T-cell (primary cell): ENCODE measurements at regions of chr6 and their contacts with region 1.

Region 1: GRCh38 chr6:105431226-105431625 is 28.3 kb upstream of the PREP start:
- DNase-seq: peak in 7 of 35 experiments; percentile 6 to 73 (median 13)
- ATAC-seq: no peak
- H3K4me3 ChIP-seq: no peak overlapping the region
- H3K4me3 Mint-ChIP-seq: no peak overlapping the region
- H3K27ac ChIP-seq: no peak overlapping the region
- H3K27ac Mint-ChIP-seq: no peak overlapping the region
- H3K4me1 ChIP-seq: no peaks in the 10 kb centered on the region
- H3K4me1 Mint-ChIP-seq: no peaks in the 10 kb centered on the region
- H3K27me3 ChIP-seq: no peaks in the 10 kb centered on the region
- H3K27me3 Mint-ChIP-seq: peaks cover 3 to 5% of the 10 kb centered on the region in 2 donors

Region 2: DNA sequence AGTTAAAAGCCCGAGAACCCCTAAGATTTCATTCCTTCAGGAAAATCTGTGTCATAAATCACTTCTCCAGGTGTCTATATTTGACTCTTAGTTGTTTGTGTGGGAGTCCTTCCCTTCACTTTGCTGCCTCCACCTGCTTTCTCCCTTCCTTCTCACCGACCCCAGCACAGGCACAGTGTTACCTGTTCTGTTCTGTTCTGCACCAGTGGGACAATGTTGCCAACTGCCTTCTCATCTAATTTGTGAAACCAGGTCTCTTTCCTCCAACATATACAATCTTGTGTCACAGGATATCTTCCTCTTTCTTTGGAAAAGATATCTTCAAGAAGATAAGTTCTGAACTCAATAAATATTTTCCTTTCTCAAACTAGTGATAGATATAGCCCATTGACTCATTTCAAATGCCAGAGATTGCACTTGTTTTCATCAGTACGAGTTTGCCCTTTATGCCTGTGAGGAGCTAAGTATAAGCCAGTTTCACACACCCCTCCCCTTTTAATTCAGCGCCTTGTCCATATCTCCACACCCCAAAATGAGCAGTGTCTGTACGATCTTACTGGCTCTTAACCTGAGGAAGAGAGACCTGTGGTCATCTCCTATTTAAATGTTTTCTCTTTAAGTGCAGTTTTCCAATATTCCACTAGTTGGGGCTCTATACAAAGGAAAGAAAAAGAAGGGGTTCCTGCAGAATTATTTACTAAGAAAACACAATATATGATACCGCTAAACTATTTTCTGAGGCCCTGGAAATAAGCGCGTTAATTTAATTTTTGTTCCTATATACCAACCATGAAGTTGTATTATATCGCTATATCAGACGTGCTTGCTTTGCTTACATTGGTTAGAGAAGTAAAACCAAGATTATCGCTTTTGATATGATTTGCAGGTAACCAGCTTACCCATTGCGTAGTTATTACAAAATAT is 53.3 kb after region 1 on chr6:
- CTCF ChIA-PET with region 1: interaction called, 6 to 10 read pairs
- POLR2A ChIA-PET with region 1: no interaction called
- DNase-seq: peak in 2 of 35 experiments; percentile 8 to 61
- ATAC-seq: peak in 1 of 4 experiments; percentile 55
- H3K4me3 ChIP-seq: peak overlapping the region in 1 of 2 donors; percentile 5
- H3K4me3 Mint-ChIP-seq: peak overlapping the region in 1 of 3 donors; percentile 18
- H3K27ac ChIP-seq: peak overlapping the region; percentile 66
- H3K27ac Mint-ChIP-seq: peak overlapping the region in 1 of 2 donors; percentile 12
- H3K4me1 ChIP-seq: peaks cover 0 to 3% of the 10 kb centered on the region in 2 experiments
- H3K4me1 Mint-ChIP-seq: peaks cover 14 to 34% (median 19%) of the 10 kb centered on the region in 3 donors
- H3K27me3 ChIP-seq: no peaks in the 10 kb centered on the region
- H3K27me3 Mint-ChIP-seq: peaks cover 1 to 6% of the 10 kb centered on the region in 2 donors

Region 3: DNA sequence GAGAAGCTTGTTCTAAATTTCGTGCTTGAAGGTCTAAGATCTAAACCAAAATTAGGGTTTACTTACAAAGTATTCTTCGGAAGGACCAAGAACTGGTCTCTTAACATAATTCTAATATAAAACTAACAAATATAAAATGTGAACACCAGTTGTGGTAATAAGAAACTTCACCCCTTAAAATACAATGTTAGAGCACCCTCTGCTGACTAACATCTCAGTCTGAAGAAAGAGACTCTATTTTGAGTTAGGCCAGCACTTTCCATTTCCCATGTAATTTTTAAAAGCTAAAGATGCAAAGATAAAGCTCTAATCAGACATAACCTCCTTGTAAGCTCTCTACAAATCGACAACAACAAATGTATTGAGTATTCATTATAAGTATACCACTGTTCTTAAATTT is 869.7 kb after region 1 on chr6:
- CTCF ChIA-PET with region 1: interaction called, 12 to 15 read pairs
- POLR2A ChIA-PET with region 1: no interaction called
- DNase-seq: peak in 1 of 35 experiments; percentile 54
- ATAC-seq: no peak
- H3K4me3 ChIP-seq: no peak overlapping the region
- H3K4me3 Mint-ChIP-seq: no peak overlapping the region
- H3K27ac ChIP-seq: no peak overlapping the region
- H3K27ac Mint-ChIP-seq: no peak overlapping the region
- H3K4me1 ChIP-seq: peaks cover 0 to 3% of the 10 kb centered on the region in 2 experiments
- H3K4me1 Mint-ChIP-seq: peaks cover 6 to 20% (median 14%) of the 10 kb centered on the region in 3 donors
- H3K27me3 ChIP-seq: no peaks in the 10 kb centered on the region
- H3K27me3 Mint-ChIP-seq: no peaks in the 10 kb centered on the region